ENCODE measurements at regions of chr7 and their contacts with region 1.

Region 1: DNA sequence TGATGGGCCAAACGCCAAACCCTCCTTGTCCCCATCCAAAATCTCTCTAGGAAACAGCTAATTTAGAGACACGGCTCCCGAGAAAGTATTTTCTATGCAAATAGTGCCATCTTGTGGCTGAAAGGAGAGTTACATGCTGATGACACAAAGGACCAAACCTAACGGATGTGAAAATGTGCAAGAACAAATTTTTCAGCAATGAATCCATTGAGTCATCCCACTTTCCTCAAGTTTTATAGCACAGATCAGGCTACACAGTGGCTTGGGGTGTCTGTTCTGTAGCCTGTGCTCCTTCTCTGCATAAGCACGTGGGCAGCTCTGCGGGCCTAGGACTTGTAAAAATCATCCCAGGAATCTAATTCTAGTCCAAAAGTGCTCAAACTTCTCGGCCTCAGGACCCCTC is 154.8 kb upstream of the PRR15 start:
- DNase-seq: no peak
- ATAC-seq: peak; percentile 75

Region 2: DNA sequence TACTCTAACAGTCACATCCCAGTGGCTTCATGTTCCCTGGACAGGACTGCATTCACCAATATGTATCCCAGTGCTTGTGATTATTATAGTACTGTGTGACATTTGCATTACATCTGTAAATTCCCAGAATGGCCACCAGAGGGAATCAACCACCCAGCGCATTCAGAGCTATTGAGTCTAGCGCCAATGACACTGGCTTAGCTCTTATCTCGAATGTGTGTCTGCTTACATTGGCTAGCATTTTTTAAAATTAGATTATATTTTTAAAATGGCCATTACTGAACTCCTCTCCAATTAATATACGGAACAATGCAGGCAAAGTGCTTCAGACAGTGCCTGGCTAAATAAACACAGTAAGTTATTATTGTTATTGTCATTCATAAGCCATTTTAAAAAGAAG is 487.0 kb before region 1 on chr7:
- intact Hi-C with region 1: loop called (anchors 5 kb)
- DNase-seq: no peak
- ATAC-seq: peak; percentile 98

Region 3: DNA sequence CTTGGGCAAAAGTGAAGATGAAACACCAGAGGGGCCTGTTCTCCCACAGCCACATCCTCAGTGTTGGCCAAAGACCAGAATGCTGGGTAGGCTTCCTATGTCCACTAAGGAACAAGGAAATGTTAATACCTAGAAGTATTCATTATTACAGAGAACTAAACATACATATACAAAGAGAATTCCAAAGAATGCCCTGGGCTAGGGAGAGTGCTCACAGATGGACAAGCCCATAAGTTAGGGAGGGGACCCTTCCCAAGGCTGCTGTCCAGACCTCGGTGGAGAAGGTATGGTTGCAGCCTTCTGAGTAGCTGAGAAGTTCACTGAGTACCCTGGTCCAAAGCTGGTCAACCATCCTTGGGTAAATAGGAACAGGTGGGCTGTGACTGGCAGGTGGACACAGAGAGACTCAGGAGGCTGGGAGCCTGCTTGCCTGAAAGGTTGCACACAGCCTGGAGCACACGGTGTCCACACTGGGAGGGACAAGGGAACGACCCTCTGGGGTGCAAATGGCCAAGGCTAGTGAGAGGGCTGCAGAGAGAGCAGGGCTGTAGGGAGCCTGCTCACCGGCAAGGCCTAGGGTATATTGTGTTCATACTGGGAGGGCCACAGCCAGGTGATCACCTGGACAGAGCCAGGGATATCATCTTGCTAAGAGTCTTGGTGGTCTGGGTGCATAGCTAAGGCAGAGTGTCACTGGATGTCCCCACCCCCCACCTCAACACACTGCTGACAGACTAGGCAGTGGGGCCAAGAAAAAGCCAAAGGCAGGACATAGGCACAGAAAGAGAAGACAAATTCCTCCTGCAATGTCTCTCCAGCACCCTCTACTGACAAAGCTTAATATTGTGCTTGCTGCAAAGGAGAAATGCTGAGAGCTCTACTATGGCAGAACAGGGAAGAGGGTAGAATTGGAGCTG is 302.8 kb before region 1 on chr7:
- intact Hi-C with region 1: loop called (anchors 5 kb)
- DNase-seq: no peak
- ATAC-seq: peak; percentile 83

Region 4: GRCh38 chr7:29189743-29190201 is 219.1 kb before region 1 on chr7:
- intact Hi-C with region 1: loop called (anchors 5 kb)
- DNase-seq: peak; percentile 76
- ATAC-seq: peak; percentile 61

Region 5: GRCh38 chr7:29370531-29371314 is 38.1 kb before region 1 on chr7:
- intact Hi-C with region 1: no loop called
- DNase-seq: no peak
- ATAC-seq: peak; percentile 69

Region 6: GRCh38 chr7:29527505-29528108 is 118.8 kb after region 1 on chr7:
- intact Hi-C with region 1: no loop called
- DNase-seq: no peak
- ATAC-seq: no peak